ENCODE measurements at regions of chr9 and their contacts with region 1.

Region 1: GRCh38 chr9:19028835-19029451 is 4.1 kb downstream of the SAXO1 start:
- DNase-seq: peak in 3 of 9 experiments; percentile 16 to 54 (median 46)
- ATAC-seq: no peak
- H3K4me3 ChIP-seq: no peak overlapping the region
- H3K4me3 Mint-ChIP-seq: no peak overlapping the region
- H3K27ac ChIP-seq: no peak overlapping the region
- H3K27ac Mint-ChIP-seq: no peak overlapping the region
- H3K4me1 ChIP-seq: no peaks in the 10 kb centered on the region
- H3K4me1 Mint-ChIP-seq: peaks cover 2% of the 10 kb centered on the region
- H3K27me3 ChIP-seq: peaks cover 0 to 2% of the 10 kb centered on the region in 2 experiments
- H3K27me3 Mint-ChIP-seq: peaks cover 20% of the 10 kb centered on the region
- CTCF ChIP-seq: peak; percentile 78

Region 2: DNA sequence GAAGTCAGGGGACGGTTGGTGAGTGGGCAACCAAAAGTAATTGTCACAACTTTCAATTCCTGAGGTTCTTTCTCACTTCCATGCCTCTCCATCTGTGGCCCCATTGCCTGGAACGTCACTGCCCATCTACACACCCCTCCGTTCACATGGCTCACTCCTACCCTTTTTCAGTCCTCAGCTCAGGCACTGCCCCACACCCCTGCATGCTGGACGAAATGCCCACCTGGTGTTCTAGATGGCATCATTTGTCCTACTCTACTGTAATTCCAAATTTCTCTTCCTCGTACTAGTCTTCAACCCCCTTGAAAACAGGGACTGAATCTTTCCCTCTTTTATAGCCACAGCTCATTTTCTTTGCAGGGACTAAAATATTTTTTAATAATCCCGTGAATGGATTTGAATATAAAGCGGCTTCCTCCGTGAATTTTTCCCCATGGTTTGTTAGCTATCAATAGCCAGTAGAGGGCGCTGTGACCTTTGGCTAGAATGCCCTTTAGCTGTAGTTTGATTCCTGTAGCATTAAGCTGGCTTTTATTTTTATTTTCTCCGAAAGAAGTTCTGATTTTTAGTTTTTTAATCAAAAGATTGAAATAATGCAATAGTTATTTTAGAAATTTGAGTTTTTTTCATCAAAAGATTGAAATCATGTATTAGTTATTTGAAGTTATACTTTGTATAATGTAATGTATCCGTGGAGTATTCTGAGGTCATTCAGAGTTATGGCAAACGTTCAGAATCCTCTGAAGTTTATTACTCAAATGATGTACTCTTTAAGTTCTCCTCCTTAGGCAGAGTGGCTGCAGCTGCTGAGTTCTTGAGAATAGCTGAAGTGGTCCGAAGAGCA is 1218.0 kb before region 1 on chr9:
- CTCF ChIA-PET with region 1: no interaction called
- POLR2A ChIA-PET with region 1: no interaction called
- intact Hi-C with region 1: loop called in 1 of 2 experiments (anchors 5 kb)
- DNase-seq: peak in 4 of 9 experiments; percentile 6 to 32 (median 18)
- ATAC-seq: no peak
- H3K4me3 ChIP-seq: no peak overlapping the region
- H3K4me3 Mint-ChIP-seq: no peak overlapping the region
- H3K27ac ChIP-seq: no peak overlapping the region
- H3K27ac Mint-ChIP-seq: no peak overlapping the region
- H3K4me1 ChIP-seq: no peaks in the 10 kb centered on the region
- H3K4me1 Mint-ChIP-seq: no peaks in the 10 kb centered on the region
- H3K27me3 ChIP-seq: no peaks in the 10 kb centered on the region
- H3K27me3 Mint-ChIP-seq: peaks cover 5% of the 10 kb centered on the region
- CTCF ChIP-seq: peak; percentile 61

Region 3: GRCh38 chr9:18037981-18038380 is 991.0 kb before region 1 on chr9:
- CTCF ChIA-PET with region 1: no interaction called
- POLR2A ChIA-PET with region 1: no interaction called
- intact Hi-C with region 1: no loop called
- DNase-seq: no peak
- ATAC-seq: no peak
- H3K4me3 ChIP-seq: no peak overlapping the region
- H3K4me3 Mint-ChIP-seq: no peak overlapping the region
- H3K27ac ChIP-seq: no peak overlapping the region
- H3K27ac Mint-ChIP-seq: no peak overlapping the region
- H3K4me1 ChIP-seq: no peaks in the 10 kb centered on the region
- H3K4me1 Mint-ChIP-seq: no peaks in the 10 kb centered on the region
- H3K27me3 ChIP-seq: no peaks in the 10 kb centered on the region
- H3K27me3 Mint-ChIP-seq: no peaks in the 10 kb centered on the region
- CTCF ChIP-seq: no peak

Region 4: GRCh38 chr9:18255158-18255629 is 773.7 kb before region 1 on chr9:
- CTCF ChIA-PET with region 1: interaction called, 10 read pairs
- POLR2A ChIA-PET with region 1: no interaction called
- intact Hi-C with region 1: loop called in 1 of 2 experiments (anchors 2 kb)
- DNase-seq: peak; percentile 25 to 81 (median 71)
- ATAC-seq: peak; percentile 78
- H3K4me3 ChIP-seq: no peak overlapping the region
- H3K4me3 Mint-ChIP-seq: no peak overlapping the region
- H3K27ac ChIP-seq: no peak overlapping the region
- H3K27ac Mint-ChIP-seq: no peak overlapping the region
- H3K4me1 ChIP-seq: no peaks in the 10 kb centered on the region
- H3K4me1 Mint-ChIP-seq: no peaks in the 10 kb centered on the region
- H3K27me3 ChIP-seq: no peaks in the 10 kb centered on the region
- H3K27me3 Mint-ChIP-seq: peaks cover 9% of the 10 kb centered on the region
- CTCF ChIP-seq: peak; percentile 100

Region 5: DNA sequence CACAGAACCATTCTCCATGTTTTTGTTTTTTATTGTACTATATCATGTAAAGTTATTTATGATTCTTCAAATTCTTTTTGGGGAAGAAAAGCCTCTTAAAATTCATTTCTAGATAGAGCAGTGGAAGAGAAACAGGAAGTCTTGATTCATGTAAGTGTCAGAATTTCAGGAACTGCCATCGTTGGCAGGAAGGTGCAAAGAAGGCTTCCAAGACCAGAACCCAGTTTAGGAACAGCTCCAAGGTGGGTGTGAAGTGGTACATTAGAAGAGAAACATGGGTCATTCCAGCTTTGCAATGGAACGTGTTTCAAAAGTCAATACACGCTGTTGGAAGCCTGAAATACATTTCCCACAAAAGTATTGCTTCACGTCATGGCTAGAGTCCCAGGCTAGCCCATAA is 10.7 kb before region 1 on chr9:
- CTCF ChIA-PET with region 1: interaction called, 12 read pairs
- POLR2A ChIA-PET with region 1: no interaction called
- intact Hi-C with region 1: no loop called
- DNase-seq: no peak
- ATAC-seq: no peak
- H3K4me3 ChIP-seq: no peak overlapping the region
- H3K4me3 Mint-ChIP-seq: no peak overlapping the region
- H3K27ac ChIP-seq: no peak overlapping the region
- H3K27ac Mint-ChIP-seq: no peak overlapping the region
- H3K4me1 ChIP-seq: no peaks in the 10 kb centered on the region
- H3K4me1 Mint-ChIP-seq: no peaks in the 10 kb centered on the region
- H3K27me3 ChIP-seq: no peaks in the 10 kb centered on the region
- H3K27me3 Mint-ChIP-seq: no peaks in the 10 kb centered on the region
- CTCF ChIP-seq: no peak

Region 6: DNA sequence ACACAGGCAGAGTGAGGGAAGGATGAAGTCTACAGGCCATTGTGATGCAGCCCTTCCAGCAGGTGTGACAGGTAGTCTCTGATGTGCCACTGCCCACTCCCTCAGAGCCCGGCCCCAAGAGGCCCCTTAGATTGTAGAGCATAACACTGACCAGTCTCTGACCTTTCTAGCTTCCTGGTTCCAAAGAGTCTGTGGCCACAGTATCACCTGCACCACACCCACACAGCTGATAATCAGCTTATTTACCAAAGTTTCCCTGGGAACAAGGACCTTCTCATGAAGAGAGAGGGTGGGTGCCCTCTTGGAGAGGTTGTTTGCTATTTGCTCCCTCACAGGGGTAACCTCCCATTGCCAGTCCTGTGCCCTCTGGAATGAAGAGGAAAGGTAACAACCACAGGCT is 368.9 kb after region 1 on chr9:
- CTCF ChIA-PET with region 1: no interaction called
- POLR2A ChIA-PET with region 1: no interaction called
- intact Hi-C with region 1: no loop called
- DNase-seq: no peak
- ATAC-seq: no peak
- H3K4me3 ChIP-seq: no peak overlapping the region
- H3K4me3 Mint-ChIP-seq: no peak overlapping the region
- H3K27ac ChIP-seq: no peak overlapping the region
- H3K27ac Mint-ChIP-seq: no peak overlapping the region
- H3K4me1 ChIP-seq: no peaks in the 10 kb centered on the region
- H3K4me1 Mint-ChIP-seq: no peaks in the 10 kb centered on the region
- H3K27me3 ChIP-seq: no peaks in the 10 kb centered on the region
- H3K27me3 Mint-ChIP-seq: no peaks in the 10 kb centered on the region
- CTCF ChIP-seq: no peak

Region 7: GRCh38 chr9:19456996-19457692 is 428.2 kb after region 1 on chr9:
- CTCF ChIA-PET with region 1: interaction called, 3 read pairs
- POLR2A ChIA-PET with region 1: no interaction called
- intact Hi-C with region 1: loop called in 1 of 2 experiments (anchors 1 kb)
- DNase-seq: peak; percentile 10 to 81 (median 59)
- ATAC-seq: peak; percentile 96
- H3K4me3 ChIP-seq: no peak overlapping the region
- H3K4me3 Mint-ChIP-seq: peak overlapping the region; percentile 24
- H3K27ac ChIP-seq: no peak overlapping the region
- H3K27ac Mint-ChIP-seq: no peak overlapping the region
- H3K4me1 ChIP-seq: peaks cover 7% of the 10 kb centered on the region
- H3K4me1 Mint-ChIP-seq: peaks cover 5% of the 10 kb centered on the region
- H3K27me3 ChIP-seq: no peaks in the 10 kb centered on the region
- H3K27me3 Mint-ChIP-seq: peaks cover 5% of the 10 kb centered on the region
- CTCF ChIP-seq: peak; percentile 89